ENCODE measurements at regions of chr17 and their contacts with region 1.

Region 1: GRCh38 chr17:28644985-28645939 is at the start of gene BLTP2:
- DNase-seq: peak; percentile 90 to 99 (median 96)
- ATAC-seq: peak; percentile 96
- H3K4me3 ChIP-seq: peak within 1 kb of the TSS; percentile 94
- H3K4me3 Mint-ChIP-seq: peak within 1 kb of the TSS; percentile 93
- H3K27ac ChIP-seq: peak within 1 kb of the TSS; percentile 76 to 96
- H3K27ac Mint-ChIP-seq: peak within 1 kb of the TSS; percentile 96
- H3K4me1 ChIP-seq: peaks cover 50% of the 10 kb centered on the region
- H3K4me1 Mint-ChIP-seq: peaks cover 38% of the 10 kb centered on the region
- H3K27me3 ChIP-seq: no peaks in the 10 kb centered on the region
- H3K27me3 Mint-ChIP-seq: no peaks in the 10 kb centered on the region
- CTCF ChIP-seq: no peak
- total RNA-seq, gene BLTP2: 120 to 124 TPM

Region 2: GRCh38 chr17:27153005-27153404 is 1492.3 kb before region 1 on chr17:
- CTCF ChIA-PET with region 1: no interaction called
- POLR2A ChIA-PET with region 1: no interaction called
- intact Hi-C with region 1: no loop called
- DNase-seq: no peak
- ATAC-seq: no peak
- H3K4me3 ChIP-seq: no peak overlapping the region
- H3K4me3 Mint-ChIP-seq: no peak overlapping the region
- H3K27ac ChIP-seq: no peak overlapping the region
- H3K27ac Mint-ChIP-seq: no peak overlapping the region
- H3K4me1 ChIP-seq: no peaks in the 10 kb centered on the region
- H3K4me1 Mint-ChIP-seq: no peaks in the 10 kb centered on the region
- H3K27me3 ChIP-seq: no peaks in the 10 kb centered on the region
- H3K27me3 Mint-ChIP-seq: no peaks in the 10 kb centered on the region
- CTCF ChIP-seq: no peak

Region 3: DNA sequence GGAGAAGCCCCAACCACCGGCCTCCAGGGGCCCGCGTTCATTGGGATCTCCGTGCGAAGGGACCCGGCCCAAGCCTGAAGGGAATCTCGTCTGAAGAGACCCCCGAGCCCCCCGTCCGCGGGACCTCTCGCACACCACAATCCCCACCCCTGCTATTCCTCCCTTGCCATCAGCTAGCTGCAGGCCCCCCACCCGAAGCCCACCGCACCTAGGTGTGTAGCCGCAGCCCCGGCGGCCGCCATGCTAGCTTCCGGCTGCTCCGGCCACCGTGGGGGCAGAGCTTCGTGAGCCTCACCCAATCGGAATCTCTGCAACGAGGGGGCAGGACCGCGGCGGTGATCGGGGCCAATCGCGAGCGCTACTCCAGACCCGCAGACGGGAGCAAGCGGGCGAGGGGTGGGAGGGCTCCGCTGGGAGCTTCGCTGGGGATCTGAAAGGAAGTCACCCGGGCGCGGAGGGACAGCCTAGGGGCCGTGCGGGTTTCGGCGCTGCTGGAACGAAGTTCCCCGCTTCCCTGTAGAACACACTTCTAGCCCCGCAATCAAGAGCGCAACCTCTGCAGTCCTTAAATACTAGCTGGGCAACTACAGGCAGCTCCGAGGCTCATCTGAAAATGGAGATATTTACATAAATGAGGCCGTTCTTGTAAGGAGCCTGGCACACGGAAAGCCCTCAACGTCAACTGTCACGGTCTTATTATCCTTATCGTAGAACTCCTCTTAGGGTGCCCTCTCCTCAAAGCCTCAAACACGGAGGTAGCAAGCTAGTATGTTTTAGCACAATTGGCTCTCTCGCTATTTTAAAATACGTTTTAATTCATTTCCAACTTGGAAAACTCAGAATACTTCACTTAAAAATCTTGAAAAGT is 73.8 kb before region 1 on chr17 and contains the start of gene PIGS:
- CTCF ChIA-PET with region 1: interaction called, 3 read pairs
- POLR2A ChIA-PET with region 1: interaction called, 15 read pairs
- intact Hi-C with region 1: loop called in 1 of 2 experiments (anchors 5 kb)
- DNase-seq: peak; percentile 78 to 95 (median 88)
- ATAC-seq: peak; percentile 96
- H3K4me3 ChIP-seq: peak within 1 kb of the TSS; percentile 95
- H3K4me3 Mint-ChIP-seq: peak within 1 kb of the TSS; percentile 94
- H3K27ac ChIP-seq: peak within 1 kb of the TSS; percentile 66 to 85
- H3K27ac Mint-ChIP-seq: peak within 1 kb of the TSS; percentile 91
- H3K4me1 ChIP-seq: peaks cover 55% of the 10 kb centered on the region
- H3K4me1 Mint-ChIP-seq: peaks cover 65% of the 10 kb centered on the region
- H3K27me3 ChIP-seq: no peaks in the 10 kb centered on the region
- H3K27me3 Mint-ChIP-seq: no peaks in the 10 kb centered on the region
- CTCF ChIP-seq: no peak
- total RNA-seq, gene PIGS: 73.8 to 76.4 TPM

Region 4: GRCh38 chr17:28598799-28599310 is 46.4 kb before region 1 on chr17 and contains the start of gene SPAG5:
- CTCF ChIA-PET with region 1: no interaction called
- POLR2A ChIA-PET with region 1: interaction called, 8 read pairs
- intact Hi-C with region 1: loop called in 1 of 2 experiments (anchors 2 kb)
- DNase-seq: peak; percentile 89 to 98 (median 95)
- ATAC-seq: peak; percentile 89
- H3K4me3 ChIP-seq: peak within 1 kb of the TSS; percentile 60
- H3K4me3 Mint-ChIP-seq: peak within 1 kb of the TSS; percentile 90
- H3K27ac ChIP-seq: peak within 1 kb of the TSS; percentile 92 to 99
- H3K27ac Mint-ChIP-seq: peak within 1 kb of the TSS; percentile 94
- H3K4me1 ChIP-seq: peaks cover 20% of the 10 kb centered on the region
- H3K4me1 Mint-ChIP-seq: peaks cover 24% of the 10 kb centered on the region
- H3K27me3 ChIP-seq: no peaks in the 10 kb centered on the region
- H3K27me3 Mint-ChIP-seq: no peaks in the 10 kb centered on the region
- CTCF ChIP-seq: no peak
- total RNA-seq, gene SPAG5: 15.4 to 17.0 TPM

Region 5: DNA sequence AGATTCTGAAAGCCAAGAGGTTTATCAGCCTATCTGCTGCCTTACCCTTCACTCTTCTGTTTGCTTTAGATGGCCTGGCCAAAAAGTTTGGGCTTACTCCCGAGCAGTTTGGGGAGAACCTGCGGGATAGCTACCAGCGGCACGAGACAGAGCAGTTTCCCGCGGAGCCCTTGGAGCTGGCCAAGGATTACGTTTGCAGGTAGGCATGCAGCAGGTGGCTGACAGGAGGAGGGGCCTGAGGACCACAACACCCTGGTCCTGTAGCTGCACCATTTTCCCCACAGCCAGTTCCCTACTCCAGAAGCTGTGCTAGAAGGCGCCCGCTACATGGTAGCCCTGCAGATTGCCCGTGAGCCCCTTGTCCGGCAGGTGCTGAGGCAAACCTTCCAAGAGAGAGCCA is 37.4 kb after region 1 on chr17:
- CTCF ChIA-PET with region 1: no interaction called
- POLR2A ChIA-PET with region 1: no interaction called
- intact Hi-C with region 1: no loop called
- DNase-seq: no peak
- ATAC-seq: no peak
- H3K4me3 ChIP-seq: no peak overlapping the region
- H3K4me3 Mint-ChIP-seq: no peak overlapping the region
- H3K27ac ChIP-seq: no peak overlapping the region
- H3K27ac Mint-ChIP-seq: no peak overlapping the region
- H3K4me1 ChIP-seq: no peaks in the 10 kb centered on the region
- H3K4me1 Mint-ChIP-seq: no peaks in the 10 kb centered on the region
- H3K27me3 ChIP-seq: no peaks in the 10 kb centered on the region
- H3K27me3 Mint-ChIP-seq: no peaks in the 10 kb centered on the region
- CTCF ChIP-seq: no peak

Region 6: DNA sequence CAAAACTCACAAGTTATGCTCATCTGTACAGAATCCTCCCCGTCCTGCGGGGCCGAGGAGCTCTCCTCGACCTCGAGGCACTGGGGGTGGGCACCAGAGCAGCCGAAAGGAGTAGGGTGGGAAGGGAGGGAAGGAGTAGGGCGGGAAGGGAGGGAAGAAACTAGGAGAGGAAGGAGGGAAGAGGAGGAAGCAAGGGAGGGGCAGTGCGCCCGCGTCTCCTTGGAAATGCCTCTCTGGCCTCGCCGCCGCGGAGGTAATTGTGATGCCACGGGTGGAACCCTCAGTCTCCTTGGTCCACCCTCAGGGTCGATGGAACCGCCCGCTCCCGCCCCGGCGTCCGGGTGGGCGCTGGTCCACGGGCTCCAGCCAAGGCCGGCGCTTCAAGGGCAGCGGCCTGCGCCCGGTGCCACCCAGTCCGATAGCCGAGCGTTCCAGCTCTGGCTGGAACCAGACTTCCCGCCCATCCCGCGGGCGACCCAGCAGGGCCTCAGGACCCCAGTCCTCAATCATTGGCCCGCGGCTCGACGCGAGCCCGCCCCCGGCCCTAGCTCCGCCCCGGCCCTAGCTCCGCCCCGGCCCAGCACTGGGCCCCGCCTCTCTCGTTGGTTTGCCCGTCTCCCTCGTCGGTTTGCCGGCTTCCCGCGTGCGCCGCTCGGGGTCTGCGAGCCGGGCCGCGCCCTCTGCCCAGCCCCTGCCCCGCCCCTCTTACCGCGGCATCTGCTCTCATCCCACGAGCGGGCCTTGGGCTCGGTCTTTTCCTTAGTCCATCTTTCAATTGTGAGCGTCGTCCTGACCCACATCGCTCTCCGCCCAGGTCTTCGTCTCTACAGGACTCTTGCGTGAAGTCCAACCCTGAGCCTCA is 65.8 kb after region 1 on chr17:
- CTCF ChIA-PET with region 1: interaction called, 10 read pairs
- POLR2A ChIA-PET with region 1: interaction called, 29 read pairs
- intact Hi-C with region 1: loop called (anchors 5 kb)
- DNase-seq: peak; percentile 78 to 93 (median 86)
- ATAC-seq: peak; percentile 92
- H3K4me3 ChIP-seq: peak overlapping the region; percentile 72
- H3K4me3 Mint-ChIP-seq: peak overlapping the region; percentile 94
- H3K27ac ChIP-seq: peak overlapping the region; percentile 68 to 73
- H3K27ac Mint-ChIP-seq: peak overlapping the region; percentile 87
- H3K4me1 ChIP-seq: peaks cover 18% of the 10 kb centered on the region
- H3K4me1 Mint-ChIP-seq: peaks cover 20% of the 10 kb centered on the region
- H3K27me3 ChIP-seq: peaks cover 4 to 5% of the 10 kb centered on the region in 2 experiments
- H3K27me3 Mint-ChIP-seq: peaks cover 17% of the 10 kb centered on the region
- CTCF ChIP-seq: no peak

Region 7: DNA sequence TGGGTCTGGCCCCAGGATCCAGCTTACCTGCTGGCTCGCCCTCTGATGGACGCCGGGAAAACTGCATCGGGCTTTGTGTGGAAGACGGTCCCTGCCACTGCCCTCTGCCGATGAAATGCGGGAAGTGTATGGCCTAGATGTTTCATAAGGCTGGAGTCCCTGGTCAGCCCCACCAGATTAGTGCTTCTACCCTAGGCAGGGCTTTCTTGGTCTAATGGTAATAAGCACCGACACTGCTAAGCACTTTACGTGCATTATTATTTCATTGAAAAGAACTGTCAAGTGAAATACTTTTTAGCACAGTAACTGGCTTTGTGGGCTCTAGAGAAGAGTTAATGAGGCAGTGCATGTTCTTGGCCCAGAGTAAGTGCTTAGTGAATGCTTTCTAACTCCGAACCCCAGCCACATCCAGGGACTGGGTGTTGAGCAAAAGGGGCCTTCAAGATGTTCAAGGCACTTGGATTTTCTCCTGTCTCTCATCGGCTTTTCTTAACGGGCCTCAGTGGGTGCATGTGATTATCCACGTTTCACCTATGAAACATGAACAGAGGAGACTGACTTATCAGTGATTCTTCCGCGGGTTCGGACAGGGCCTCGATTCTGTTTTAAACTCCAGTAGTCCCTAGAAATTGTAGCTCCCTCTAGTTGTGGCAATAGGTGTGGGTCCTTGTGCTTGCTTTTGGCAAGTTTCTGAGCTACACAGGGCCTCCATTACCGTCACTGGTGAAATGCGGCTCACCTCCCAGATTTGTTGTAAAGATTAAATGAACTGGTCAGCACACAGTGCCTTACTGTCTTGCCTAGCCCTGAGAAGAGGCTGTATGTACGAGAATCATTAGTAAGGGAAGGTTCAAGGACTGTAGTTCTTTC is 105.2 kb after region 1 on chr17:
- CTCF ChIA-PET with region 1: interaction called, 10 read pairs
- POLR2A ChIA-PET with region 1: interaction called, 3 read pairs
- intact Hi-C with region 1: no loop called
- DNase-seq: peak; percentile 82 to 94 (median 86)
- ATAC-seq: peak; percentile 90
- H3K4me3 ChIP-seq: no peak overlapping the region
- H3K4me3 Mint-ChIP-seq: peak overlapping the region; percentile 42
- H3K27ac ChIP-seq: no peak overlapping the region
- H3K27ac Mint-ChIP-seq: peak overlapping the region; percentile 70
- H3K4me1 ChIP-seq: peaks cover 27% of the 10 kb centered on the region
- H3K4me1 Mint-ChIP-seq: peaks cover 21% of the 10 kb centered on the region
- H3K27me3 ChIP-seq: no peaks in the 10 kb centered on the region
- H3K27me3 Mint-ChIP-seq: no peaks in the 10 kb centered on the region
- CTCF ChIP-seq: peak; percentile 100

Region 8: GRCh38 chr17:29116804-29117772 is 471.8 kb after region 1 on chr17:
- CTCF ChIA-PET with region 1: interaction called, 10 read pairs
- POLR2A ChIA-PET with region 1: interaction called, 4 read pairs
- intact Hi-C with region 1: loop called (anchors 1 to 5 kb)
- DNase-seq: peak; percentile 70 to 87 (median 74)
- ATAC-seq: peak; percentile 91
- H3K4me3 ChIP-seq: no peak overlapping the region
- H3K4me3 Mint-ChIP-seq: no peak overlapping the region
- H3K27ac ChIP-seq: no peak overlapping the region
- H3K27ac Mint-ChIP-seq: no peak overlapping the region
- H3K4me1 ChIP-seq: peaks cover 11% of the 10 kb centered on the region
- H3K4me1 Mint-ChIP-seq: peaks cover 5% of the 10 kb centered on the region
- H3K27me3 ChIP-seq: no peaks in the 10 kb centered on the region
- H3K27me3 Mint-ChIP-seq: no peaks in the 10 kb centered on the region
- CTCF ChIP-seq: peak; percentile 98

Measured in CD4-positive, alpha-beta T cell (primary cell).